AG04450 (cell line): ENCODE measurements at regions of chr6 and their contacts with region 1.

Region 1: DNA sequence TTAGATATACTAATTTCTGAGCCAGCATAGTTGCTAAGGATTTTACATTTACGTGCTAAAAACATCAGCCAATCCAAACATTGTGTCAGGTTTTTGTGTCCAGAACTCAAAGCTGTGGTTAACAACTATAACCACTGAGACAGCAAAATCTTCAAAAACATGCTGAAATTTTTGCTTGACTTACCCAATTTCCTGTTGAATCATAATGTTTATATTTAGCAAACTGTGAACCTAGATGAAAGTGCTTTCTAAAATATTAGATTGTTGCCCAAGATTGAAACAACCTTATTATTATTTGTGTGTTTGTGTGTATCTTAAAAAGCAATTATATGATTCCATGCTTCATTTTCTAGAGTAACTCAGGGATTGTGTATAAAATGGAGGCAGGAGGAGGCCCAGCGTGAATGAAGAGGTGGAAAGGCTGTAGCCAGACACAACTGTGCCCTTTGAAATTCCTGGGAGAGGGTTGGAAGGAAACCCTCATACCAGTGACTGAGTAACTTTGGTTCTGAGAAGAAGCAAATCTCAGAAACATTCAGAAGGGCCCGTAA is 48.0 kb downstream of the ARMC2 start:
- DNase-seq: peak; percentile 55
- H3K4me3 ChIP-seq: no peak overlapping the region
- H3K27ac ChIP-seq: peak overlapping the region; percentile 89
- H3K27me3 ChIP-seq: no peaks in the 10 kb centered on the region
- CTCF ChIP-seq: no peak

Region 2: GRCh38 chr6:108541838-108542759 is 354.1 kb before region 1 on chr6:
- CTCF ChIA-PET with region 1: interaction called, 116 read pairs
- POLR2A ChIA-PET with region 1: interaction called, 4 read pairs
- DNase-seq: peak; percentile 79
- H3K4me3 ChIP-seq: no peak overlapping the region
- H3K27ac ChIP-seq: no peak overlapping the region
- H3K27me3 ChIP-seq: peaks cover 2% of the 10 kb centered on the region
- CTCF ChIP-seq: peak; percentile 90

Region 3: GRCh38 chr6:108822401-108822800 is 73.8 kb before region 1 on chr6:
- CTCF ChIA-PET with region 1: no interaction called
- POLR2A ChIA-PET with region 1: no interaction called
- DNase-seq: no peak
- H3K4me3 ChIP-seq: no peak overlapping the region
- H3K27ac ChIP-seq: no peak overlapping the region
- H3K27me3 ChIP-seq: no peaks in the 10 kb centered on the region
- CTCF ChIP-seq: no peak

Region 4: DNA sequence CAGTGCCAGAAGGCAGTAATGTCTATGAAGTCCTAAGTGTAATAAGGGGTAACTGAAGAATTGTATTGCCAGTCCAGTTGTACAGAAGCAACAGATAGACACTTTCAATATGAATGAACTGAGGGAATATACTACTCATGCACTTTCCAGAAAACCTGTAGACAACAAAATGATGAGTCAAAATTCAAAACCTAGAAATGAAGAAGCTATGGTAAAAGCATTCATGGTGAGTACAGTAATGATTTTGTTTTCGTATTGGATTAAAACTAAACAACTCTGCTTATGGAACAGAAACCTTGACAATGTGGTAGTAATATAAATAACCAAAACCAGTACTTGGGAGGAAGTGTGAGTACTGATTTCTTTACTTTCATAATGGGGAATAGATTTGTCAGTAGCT is 13.0 kb before region 1 on chr6:
- CTCF ChIA-PET with region 1: interaction called, 28 read pairs
- POLR2A ChIA-PET with region 1: no interaction called
- DNase-seq: no peak
- H3K4me3 ChIP-seq: no peak overlapping the region
- H3K27ac ChIP-seq: no peak overlapping the region
- H3K27me3 ChIP-seq: no peaks in the 10 kb centered on the region
- CTCF ChIP-seq: no peak